Activated CD8-positive, alpha-beta T cell treated with anti-CD3 and anti-CD28 coated beads for 36 hours (primary cell): ENCODE measurements at regions of chr12 and their contacts with region 1.

Region 1: DNA sequence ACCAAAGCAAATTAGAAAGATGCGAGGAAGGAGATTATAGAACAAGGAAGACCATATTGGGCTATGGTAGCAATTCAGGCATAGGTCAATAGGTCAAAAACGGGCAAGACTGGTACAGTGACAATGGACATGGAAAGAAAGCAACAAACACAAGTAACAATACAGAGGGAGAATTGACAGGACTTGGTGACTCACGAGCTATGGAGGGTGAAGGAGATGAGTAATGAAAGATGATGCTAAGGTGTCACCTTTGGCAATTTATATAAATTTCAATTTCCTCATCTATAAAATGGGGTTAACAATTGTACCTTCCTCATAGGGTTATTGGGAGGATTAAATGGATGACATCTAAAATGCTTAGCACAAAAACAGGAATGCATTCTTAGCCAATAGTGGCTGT is 15.1 kb upstream of the DUSP16 start:
- DNase-seq: no peak
- ATAC-seq: peak; percentile 35
- H3K4me3 Mint-ChIP-seq: no peak overlapping the region
- H3K27ac Mint-ChIP-seq: no peak overlapping the region
- H3K4me1 Mint-ChIP-seq: peaks cover 11% of the 10 kb centered on the region
- H3K27me3 Mint-ChIP-seq: no peaks in the 10 kb centered on the region
- CTCF ChIP-seq: no peak

Region 2: DNA sequence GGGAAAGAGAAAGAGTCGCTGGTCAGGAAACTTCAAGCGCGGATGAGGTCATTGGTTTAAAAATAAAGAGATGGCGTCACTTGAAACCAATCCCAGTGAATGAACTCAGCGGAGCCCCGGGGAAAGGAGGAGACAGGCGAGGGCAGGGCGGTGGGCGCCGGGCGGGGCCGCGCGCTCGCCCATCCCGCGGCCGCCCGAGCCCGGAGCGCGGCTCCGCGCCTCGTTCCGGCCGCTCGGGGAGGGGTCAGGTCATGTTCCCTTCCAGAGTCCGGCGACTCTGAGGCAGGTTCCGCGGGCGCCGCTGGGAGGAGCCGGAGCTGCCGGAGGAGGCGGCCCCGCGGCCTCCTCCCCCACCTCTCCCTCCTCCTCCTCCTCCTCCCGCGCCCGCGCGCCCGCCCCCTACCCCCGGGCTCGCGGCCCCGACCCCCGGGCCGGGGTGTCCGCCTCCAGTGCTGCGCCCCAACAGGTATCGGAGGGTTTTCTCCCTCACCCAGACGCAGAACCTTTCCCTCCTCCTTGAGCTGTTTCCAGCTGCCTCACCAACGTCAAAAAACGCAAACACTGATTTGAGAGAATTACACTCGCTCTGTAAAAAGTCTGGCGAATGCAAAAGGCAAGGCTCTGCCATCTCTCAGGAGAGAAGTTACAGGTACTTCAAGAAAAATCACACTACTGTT is 15.1 kb before region 1 on chr12 and contains the start of gene DUSP16:
- CTCF ChIA-PET with region 1: interaction called, 19 read pairs
- POLR2A ChIA-PET with region 1: interaction called, 4 read pairs
- intact Hi-C with region 1: no loop called
- DNase-seq: peak; percentile 82
- ATAC-seq: peak; percentile 78
- H3K4me3 Mint-ChIP-seq: peak within 1 kb of the TSS; percentile 89
- H3K27ac Mint-ChIP-seq: peak within 1 kb of the TSS; percentile 91
- H3K4me1 Mint-ChIP-seq: peaks cover 33% of the 10 kb centered on the region
- H3K27me3 Mint-ChIP-seq: no peaks in the 10 kb centered on the region
- CTCF ChIP-seq: no peak
- total RNA-seq, gene DUSP16: 28.2 to 30.2 TPM

Region 3: GRCh38 chr12:12600255-12601034 is 22.7 kb after region 1 on chr12:
- CTCF ChIA-PET with region 1: no interaction called
- POLR2A ChIA-PET with region 1: no interaction called
- intact Hi-C with region 1: no loop called
- DNase-seq: no peak
- ATAC-seq: no peak
- H3K4me3 Mint-ChIP-seq: no peak overlapping the region
- H3K27ac Mint-ChIP-seq: no peak overlapping the region
- H3K4me1 Mint-ChIP-seq: no peaks in the 10 kb centered on the region
- H3K27me3 Mint-ChIP-seq: peaks cover 1% of the 10 kb centered on the region
- CTCF ChIP-seq: no peak